ENCODE measurements at regions of chr6 and their contacts with region 1.

Region 1: GRCh38 chr6:122399384-122400158 is at the start of gene HSF2:
- DNase-seq: peak; percentile 79 to 95 (median 91)
- ATAC-seq: peak; percentile 98
- H3K4me3 ChIP-seq: peak within 1 kb of the TSS; percentile 90
- H3K4me3 Mint-ChIP-seq: peak within 1 kb of the TSS; percentile 89 to 100 (median 99)
- H3K27ac ChIP-seq: peak within 1 kb of the TSS; percentile 87
- H3K27ac Mint-ChIP-seq: peak within 1 kb of the TSS; percentile 93 to 98 (median 97)
- H3K4me1 ChIP-seq: peaks cover 13 to 25% of the 10 kb centered on the region in 2 donors
- H3K4me1 Mint-ChIP-seq: peaks cover 29 to 54% (median 43%) of the 10 kb centered on the region in 7 donors
- H3K27me3 ChIP-seq: no peaks in the 10 kb centered on the region
- H3K27me3 Mint-ChIP-seq: no peaks in the 10 kb centered on the region
- total RNA-seq, gene HSF2: 12.5 to 32.4 (median 26.5) TPM

Region 2: DNA sequence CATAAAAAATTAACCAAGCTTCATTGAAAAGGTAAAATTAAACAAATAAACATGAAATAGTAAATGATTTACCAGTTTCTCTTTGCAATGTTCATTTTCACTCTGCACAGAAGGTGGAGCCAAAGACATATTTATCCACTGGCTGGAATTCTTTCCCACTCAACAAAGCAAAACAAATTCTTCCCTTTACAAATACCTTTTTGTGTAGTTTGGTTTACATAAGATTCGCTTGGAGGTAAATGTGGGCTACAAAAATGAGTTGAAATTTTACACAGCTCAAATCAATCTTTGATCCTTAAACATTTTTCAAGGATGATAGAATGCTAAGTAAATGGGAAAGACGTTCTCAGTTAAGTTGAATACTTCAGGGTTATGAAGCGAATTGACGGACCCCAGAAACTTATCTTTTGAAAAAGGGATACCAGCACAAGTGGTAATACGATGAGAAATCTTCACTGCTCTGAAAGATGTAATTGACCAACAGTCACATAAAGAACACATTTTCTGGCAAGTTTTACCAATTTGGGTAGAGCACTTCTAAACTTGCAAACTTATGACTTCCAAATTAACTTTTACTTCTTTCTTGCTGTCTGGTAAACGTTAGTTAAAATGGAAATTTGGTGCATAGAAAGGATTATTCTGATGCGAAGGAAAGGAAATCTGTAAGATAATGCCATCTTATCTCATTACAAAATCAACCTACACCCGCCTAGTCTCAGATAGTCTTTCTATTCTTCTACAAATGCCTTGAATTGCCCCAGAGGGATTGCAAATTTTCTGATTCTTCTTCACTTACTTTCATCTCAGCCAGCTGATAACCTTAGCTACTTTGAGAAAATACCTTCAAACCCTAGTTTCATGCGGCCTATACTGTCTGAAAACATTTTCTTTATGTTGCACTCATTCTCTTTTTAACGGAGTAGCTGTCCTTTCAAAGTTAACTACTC is 968.8 kb before region 1 on chr6:
- CTCF ChIA-PET with region 1: no interaction called
- POLR2A ChIA-PET with region 1: no interaction called
- intact Hi-C with region 1: loop called in 1 of 2 experiments (anchors 10 kb)
- DNase-seq: no peak
- ATAC-seq: no peak
- H3K4me3 ChIP-seq: no peak overlapping the region
- H3K4me3 Mint-ChIP-seq: no peak overlapping the region
- H3K27ac ChIP-seq: no peak overlapping the region
- H3K27ac Mint-ChIP-seq: peak overlapping the region in 1 of 9 donors; percentile 2
- H3K4me1 ChIP-seq: no peaks in the 10 kb centered on the region
- H3K4me1 Mint-ChIP-seq: peaks cover 0 to 23% (median 12%) of the 10 kb centered on the region in 7 donors
- H3K27me3 ChIP-seq: no peaks in the 10 kb centered on the region
- H3K27me3 Mint-ChIP-seq: peaks cover 0 to 9% (median 0%) of the 10 kb centered on the region in 5 donors

Region 3: DNA sequence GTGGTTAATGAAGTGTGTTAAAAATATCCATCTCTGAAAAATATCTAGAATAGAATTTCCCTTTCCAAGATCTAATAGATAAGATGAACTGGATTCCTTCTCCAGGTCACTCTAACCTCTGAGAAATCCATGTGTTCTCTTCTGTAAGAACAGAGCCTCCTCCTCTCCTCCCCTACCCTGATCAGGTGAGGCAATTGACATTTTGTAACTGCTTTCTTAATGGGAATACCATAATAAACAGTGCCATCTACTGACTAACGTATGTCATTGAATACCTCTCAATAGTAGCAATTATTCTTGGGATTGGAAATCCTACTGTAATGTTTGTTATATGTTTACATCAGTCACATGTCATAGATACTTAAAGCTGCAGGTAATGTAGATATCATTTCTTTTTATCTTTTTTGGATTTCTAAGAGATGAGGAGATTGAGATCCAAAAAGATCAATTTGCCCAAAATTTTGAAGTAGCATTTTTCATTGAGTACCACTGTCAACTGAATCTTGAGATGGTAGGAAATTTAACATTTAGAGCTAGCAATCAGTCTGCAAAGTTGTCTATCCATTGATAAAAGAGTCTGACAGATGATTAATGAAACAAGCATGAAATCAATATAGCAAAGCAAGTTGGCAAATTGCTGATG is 365.9 kb before region 1 on chr6:
- CTCF ChIA-PET with region 1: no interaction called
- POLR2A ChIA-PET with region 1: no interaction called
- intact Hi-C with region 1: no loop called
- DNase-seq: peak in 6 of 9 donors; percentile 12 to 60 (median 53)
- ATAC-seq: peak; percentile 84
- H3K4me3 ChIP-seq: no peak overlapping the region
- H3K4me3 Mint-ChIP-seq: no peak overlapping the region
- H3K27ac ChIP-seq: no peak overlapping the region
- H3K27ac Mint-ChIP-seq: no peak overlapping the region
- H3K4me1 ChIP-seq: no peaks in the 10 kb centered on the region
- H3K4me1 Mint-ChIP-seq: peaks cover 0 to 12% (median 0%) of the 10 kb centered on the region in 7 donors
- H3K27me3 ChIP-seq: no peaks in the 10 kb centered on the region
- H3K27me3 Mint-ChIP-seq: peaks cover 0 to 5% (median 0%) of the 10 kb centered on the region in 5 donors

Region 4: GRCh38 chr6:122258839-122259238 is 140.7 kb before region 1 on chr6:
- CTCF ChIA-PET with region 1: no interaction called
- POLR2A ChIA-PET with region 1: no interaction called
- intact Hi-C with region 1: no loop called
- DNase-seq: no peak
- ATAC-seq: no peak
- H3K4me3 ChIP-seq: no peak overlapping the region
- H3K4me3 Mint-ChIP-seq: no peak overlapping the region
- H3K27ac ChIP-seq: no peak overlapping the region
- H3K27ac Mint-ChIP-seq: no peak overlapping the region
- H3K4me1 ChIP-seq: no peaks in the 10 kb centered on the region
- H3K4me1 Mint-ChIP-seq: no peaks in the 10 kb centered on the region
- H3K27me3 ChIP-seq: no peaks in the 10 kb centered on the region
- H3K27me3 Mint-ChIP-seq: peaks cover 0 to 16% (median 3%) of the 10 kb centered on the region in 5 donors

Region 5: DNA sequence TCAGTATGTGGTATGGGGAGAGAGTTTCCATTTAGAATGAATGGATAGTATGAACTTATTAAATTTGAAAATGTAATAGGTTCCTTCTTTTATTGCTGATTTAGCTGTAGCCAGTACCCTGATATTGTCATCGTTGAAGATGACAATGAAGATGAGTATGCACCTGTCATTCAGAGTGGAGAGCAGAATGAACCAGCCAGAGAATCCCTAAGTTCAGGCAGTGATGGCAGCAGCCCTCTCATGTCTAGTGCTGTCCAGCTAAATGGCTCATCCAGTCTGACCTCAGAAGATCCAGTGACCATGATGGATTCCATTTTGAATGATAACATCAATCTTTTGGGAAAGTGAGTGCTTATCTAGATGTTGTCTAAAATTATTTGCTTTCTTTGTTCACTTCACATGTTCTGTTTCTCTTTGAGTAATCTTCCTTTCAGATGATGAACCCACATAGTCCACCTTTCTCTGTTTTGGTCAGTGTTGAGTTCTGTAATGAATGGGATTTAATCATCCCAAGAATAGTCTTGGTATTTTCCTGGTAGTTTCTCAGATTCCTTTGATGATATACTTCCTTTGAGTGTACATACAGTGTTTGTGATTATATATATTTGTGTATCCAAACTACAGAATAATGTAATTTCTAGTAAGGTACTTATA is 23.2 kb after region 1 on chr6:
- CTCF ChIA-PET with region 1: no interaction called
- POLR2A ChIA-PET with region 1: interaction called, 3 read pairs
- intact Hi-C with region 1: loop called in 1 of 2 experiments (anchors 2 kb)
- DNase-seq: no peak
- ATAC-seq: no peak
- H3K4me3 ChIP-seq: no peak overlapping the region
- H3K4me3 Mint-ChIP-seq: no peak overlapping the region
- H3K27ac ChIP-seq: no peak overlapping the region
- H3K27ac Mint-ChIP-seq: no peak overlapping the region
- H3K4me1 ChIP-seq: no peaks in the 10 kb centered on the region
- H3K4me1 Mint-ChIP-seq: peaks cover 1 to 19% (median 12%) of the 10 kb centered on the region in 7 donors
- H3K27me3 ChIP-seq: no peaks in the 10 kb centered on the region
- H3K27me3 Mint-ChIP-seq: no peaks in the 10 kb centered on the region

Region 6: GRCh38 chr6:122530440-122531046 is 131.0 kb after region 1 on chr6:
- CTCF ChIA-PET with region 1: interaction called, 6 read pairs
- POLR2A ChIA-PET with region 1: no interaction called
- intact Hi-C with region 1: loop called in 1 of 2 experiments (anchors 5 kb)
- DNase-seq: peak in 8 of 9 donors; percentile 36 to 73 (median 64)
- ATAC-seq: peak; percentile 86
- H3K4me3 ChIP-seq: no peak overlapping the region
- H3K4me3 Mint-ChIP-seq: no peak overlapping the region
- H3K27ac ChIP-seq: no peak overlapping the region
- H3K27ac Mint-ChIP-seq: no peak overlapping the region
- H3K4me1 ChIP-seq: no peaks in the 10 kb centered on the region
- H3K4me1 Mint-ChIP-seq: peaks cover 0 to 8% (median 0%) of the 10 kb centered on the region in 7 donors
- H3K27me3 ChIP-seq: no peaks in the 10 kb centered on the region
- H3K27me3 Mint-ChIP-seq: peaks cover 34 to 48% (median 37%) of the 10 kb centered on the region in 5 donors

Measured in naive thymus-derived CD4-positive, alpha-beta T cell (primary cell).